Panc1 (cell line): ENCODE measurements at regions of chr4 and their contacts with region 1.

Region 1: GRCh38 chr4:39469429-39470077 is 10.7 kb downstream of the LIAS start:
- DNase-seq: peak; percentile 64
- ATAC-seq: peak; percentile 73
- H3K4me3 ChIP-seq: no peak overlapping the region
- H3K27ac ChIP-seq: peak overlapping the region; percentile 44
- H3K4me1 ChIP-seq: no peaks in the 10 kb centered on the region
- H3K27me3 ChIP-seq: no peaks in the 10 kb centered on the region
- CTCF ChIP-seq: peak; percentile 75

Region 2: DNA sequence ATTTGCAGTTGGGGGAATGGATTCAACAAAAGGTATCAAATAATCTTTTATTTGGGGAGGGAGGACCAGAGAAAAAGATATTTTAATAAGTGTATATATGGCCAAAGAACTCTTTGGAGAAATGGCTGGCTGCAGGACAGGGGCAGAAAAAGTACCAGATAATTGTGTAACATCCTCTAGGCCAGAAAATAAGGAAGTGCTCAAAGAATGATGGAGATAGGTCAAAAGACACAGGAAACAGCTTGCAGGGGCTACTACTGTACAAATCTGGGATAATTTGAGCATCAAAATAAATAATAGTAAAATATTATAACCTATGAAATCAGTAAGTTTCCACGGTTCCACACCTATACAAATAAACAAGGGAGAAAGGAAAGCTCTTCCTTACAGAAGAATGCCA is 372.7 kb before region 1 on chr4:
- CTCF ChIA-PET with region 1: no interaction called
- POLR2A ChIA-PET with region 1: no interaction called
- in situ Hi-C with region 1: no loop called
- intact Hi-C with region 1: no loop called
- DNase-seq: no peak
- ATAC-seq: no peak
- H3K4me3 ChIP-seq: no peak overlapping the region
- H3K27ac ChIP-seq: no peak overlapping the region
- H3K4me1 ChIP-seq: no peaks in the 10 kb centered on the region; the same call in 1 of the 2 replicates
- H3K27me3 ChIP-seq: no peaks in the 10 kb centered on the region
- CTCF ChIP-seq: no peak

Region 3: DNA sequence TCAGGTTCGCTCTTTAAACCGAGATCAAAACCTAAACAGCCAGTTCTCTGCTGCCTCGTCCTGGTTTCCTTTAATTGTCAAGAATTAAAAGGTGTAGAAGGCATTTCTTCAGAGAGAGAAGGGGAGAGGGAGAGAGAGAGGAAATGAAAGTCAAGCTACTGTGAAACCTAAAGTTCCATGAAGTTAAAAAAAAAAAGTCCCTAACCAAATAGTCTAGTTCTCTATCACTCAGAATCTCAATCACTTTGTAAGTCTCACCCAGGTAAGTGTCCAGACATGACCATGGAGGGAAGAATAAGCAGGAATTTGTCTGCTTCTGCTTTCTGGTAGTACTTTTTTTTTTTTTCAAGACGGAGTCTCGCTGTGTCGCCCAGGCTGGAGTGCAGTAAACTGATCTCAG is 187.9 kb after region 1 on chr4:
- CTCF ChIA-PET with region 1: no interaction called
- POLR2A ChIA-PET with region 1: interaction called, 4 read pairs
- in situ Hi-C with region 1: no loop called
- intact Hi-C with region 1: loop called (anchors 5 kb)
- DNase-seq: no peak
- ATAC-seq: no peak
- H3K4me3 ChIP-seq: no peak overlapping the region
- H3K27ac ChIP-seq: no peak overlapping the region
- H3K4me1 ChIP-seq: no peaks in the 10 kb centered on the region
- H3K27me3 ChIP-seq: no peaks in the 10 kb centered on the region
- CTCF ChIP-seq: no peak

Region 4: DNA sequence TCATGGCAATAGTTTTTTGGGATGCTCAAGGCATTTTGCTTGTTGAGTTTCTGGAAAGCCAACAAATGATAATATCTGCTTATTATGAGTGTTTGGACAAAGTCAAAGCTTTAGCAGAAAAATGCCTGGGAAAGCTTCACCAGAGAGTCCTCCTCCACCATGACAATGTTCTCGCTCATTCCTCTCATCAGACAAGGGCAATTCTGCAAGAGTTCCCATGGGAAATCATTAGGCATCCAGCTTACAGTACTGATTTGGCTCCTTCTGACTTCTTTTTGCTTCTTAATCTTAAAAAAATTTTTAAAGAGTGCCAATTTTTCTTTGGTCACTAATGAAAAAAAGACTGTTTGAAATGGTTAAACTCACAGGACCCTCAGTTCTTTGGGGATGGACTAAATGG is 364.7 kb after region 1 on chr4:
- CTCF ChIA-PET with region 1: no interaction called
- POLR2A ChIA-PET with region 1: interaction called, 11 read pairs
- in situ Hi-C with region 1: no loop called
- intact Hi-C with region 1: no loop called
- DNase-seq: no peak
- ATAC-seq: no peak
- H3K4me3 ChIP-seq: no peak overlapping the region
- H3K27ac ChIP-seq: no peak overlapping the region
- H3K4me1 ChIP-seq: no peaks in the 10 kb centered on the region
- H3K27me3 ChIP-seq: no peaks in the 10 kb centered on the region
- CTCF ChIP-seq: no peak